Posterior vena cava (tissue), 2 donors: ENCODE measurements at regions of chr5 and their contacts with region 1.

Region 1: DNA sequence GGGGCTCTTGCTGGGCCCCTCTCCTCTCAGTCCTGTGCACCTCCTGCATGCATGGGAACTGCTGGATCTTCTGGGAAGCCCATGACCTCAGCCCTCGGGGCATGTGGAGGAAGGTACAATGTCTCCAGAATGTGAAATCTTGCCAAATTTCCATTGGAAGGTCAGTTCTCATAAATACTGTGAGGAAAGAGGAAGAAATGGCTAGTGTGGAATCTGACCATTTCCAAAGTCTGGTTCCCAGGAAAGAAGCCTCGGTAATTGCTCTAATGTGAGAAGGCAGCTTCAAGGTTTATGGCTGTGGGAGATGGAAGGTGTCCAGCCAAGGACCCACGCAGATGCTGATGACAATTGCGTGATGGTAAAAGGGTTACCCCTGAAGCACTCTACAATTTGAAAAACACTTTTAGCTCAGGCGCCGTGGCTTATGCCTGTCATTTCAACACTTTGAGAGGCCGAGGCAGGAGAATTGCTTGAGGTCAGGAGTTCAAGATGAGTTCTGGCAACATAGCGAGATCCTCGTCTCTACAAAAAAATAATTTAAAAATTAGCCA is 8.1 kb upstream of the IL17B start:
- DNase-seq: peak; percentile 79

Region 2: DNA sequence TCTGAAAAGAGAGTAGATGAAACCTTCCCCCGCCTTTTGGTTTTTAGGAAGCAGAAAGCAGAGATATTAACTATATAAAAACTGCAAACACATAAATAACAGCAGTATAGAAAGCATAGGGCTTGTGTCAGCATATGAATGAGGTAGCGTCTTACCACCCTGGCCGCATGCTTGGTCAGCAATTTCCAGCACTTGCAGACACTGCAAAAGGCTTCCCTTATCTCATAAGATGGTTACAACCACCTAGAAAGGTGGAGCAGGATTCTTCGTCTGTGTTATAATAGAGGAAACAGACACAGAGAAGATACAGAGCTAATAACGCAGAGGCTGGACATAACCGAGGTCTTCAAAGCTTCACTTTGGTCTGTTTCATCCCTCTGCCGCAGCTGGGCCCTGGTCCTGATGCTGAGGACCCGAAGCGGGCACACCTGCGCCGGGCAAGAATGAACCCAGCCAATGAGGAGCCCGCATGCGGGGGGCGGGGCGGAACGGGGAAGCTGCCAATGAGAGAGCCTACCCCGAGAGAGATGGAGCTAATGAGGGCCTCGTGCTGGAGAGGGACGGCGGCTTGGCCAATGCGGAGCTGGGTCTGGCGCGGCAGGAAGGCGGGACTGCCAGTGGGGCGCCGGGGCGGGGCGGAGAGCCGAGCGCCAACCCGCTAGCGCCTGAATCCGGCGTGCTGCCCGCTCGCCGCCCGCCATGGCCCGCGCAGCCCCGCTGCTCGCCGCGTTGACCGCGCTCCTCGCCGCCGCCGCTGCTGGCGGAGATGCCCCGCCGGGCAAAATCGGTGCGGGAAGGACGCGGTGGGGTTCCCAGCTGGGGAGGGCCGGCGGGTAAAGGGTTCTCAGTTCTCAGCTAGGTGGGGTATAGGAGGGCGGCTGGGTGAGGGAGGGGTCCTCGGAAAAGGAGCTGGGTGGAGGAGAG is 29.5 kb before region 1 on chr5 and contains the start of gene PCYOX1L:
- intact Hi-C with region 1: no loop called
- DNase-seq: peak; percentile 98
- total RNA-seq, gene PCYOX1L: 3.1 to 5.6 TPM

Region 3: DNA sequence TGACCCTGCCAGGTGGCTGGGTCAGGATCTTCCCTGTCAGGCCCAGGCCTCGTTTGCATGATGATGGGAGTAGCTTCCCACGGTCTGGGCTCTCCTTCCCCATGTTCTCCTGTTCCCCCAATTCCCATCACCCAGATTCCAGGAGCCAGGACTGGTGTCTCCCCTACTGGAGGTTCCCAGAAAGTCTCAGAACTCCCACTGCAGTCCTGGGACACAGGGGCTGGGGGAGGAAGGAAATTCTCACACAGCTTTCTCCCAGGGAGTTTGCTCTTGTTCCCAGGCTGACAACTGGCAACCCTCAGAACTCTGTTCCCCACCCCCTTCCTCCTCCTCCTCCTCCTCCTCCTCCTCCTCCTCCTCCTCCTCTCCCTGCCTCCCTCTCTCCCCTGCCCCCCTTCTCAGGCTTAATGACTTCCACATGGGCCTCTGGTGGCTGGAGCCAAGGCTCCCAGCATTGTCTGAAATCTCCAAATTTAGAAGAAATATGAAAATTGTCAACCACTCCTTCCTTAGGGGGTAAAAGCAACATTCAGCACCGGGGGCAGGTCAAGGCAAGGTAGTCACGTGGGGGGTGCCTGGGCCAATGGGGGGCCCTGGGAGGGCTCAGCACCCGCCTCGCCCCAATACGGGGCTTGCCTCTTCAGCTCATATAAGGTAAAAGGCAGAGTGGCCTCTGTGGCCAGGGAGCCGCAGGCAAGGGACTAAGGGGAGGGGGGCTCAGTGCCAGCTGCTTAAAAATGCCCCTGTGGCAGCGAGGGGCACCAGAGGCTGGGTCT is 19.2 kb after region 1 on chr5:
- intact Hi-C with region 1: loop called in 1 of 2 experiments (anchors 2 kb)
- DNase-seq: peak; percentile 93